ENCODE measurements at regions of chr10 and their contacts with region 1.

Region 1: DNA sequence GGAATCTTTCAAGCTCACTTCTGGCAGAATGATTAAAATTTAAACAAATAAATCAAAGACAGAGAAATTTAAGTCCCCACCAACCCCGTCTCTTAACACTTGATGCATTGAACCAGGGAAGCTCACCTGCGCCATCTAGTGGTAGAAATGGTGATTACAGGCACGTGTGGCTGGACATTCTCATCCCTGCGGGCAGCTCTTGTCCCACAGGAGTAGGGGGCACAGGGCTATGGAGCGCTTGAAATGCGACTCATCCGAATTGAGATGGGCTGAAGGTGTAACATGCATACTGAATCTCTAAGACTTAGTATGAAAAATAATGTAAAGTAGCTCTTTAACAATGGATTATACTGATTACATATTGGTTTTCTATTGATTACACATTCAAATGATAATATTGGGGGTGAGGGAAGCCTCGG is 24.8 kb upstream of the SLIT1 start:
- DNase-seq: peak; percentile 79
- ATAC-seq: peak; percentile 76
- H3K4me3 Mint-ChIP-seq: no peak overlapping the region
- H3K27ac Mint-ChIP-seq: no peak overlapping the region
- H3K4me1 Mint-ChIP-seq: no peaks in the 10 kb centered on the region
- H3K27me3 Mint-ChIP-seq: no peaks in the 10 kb centered on the region

Region 2: GRCh38 chr10:97096261-97097083 is 114.1 kb before region 1 on chr10:
- CTCF ChIA-PET with region 1: interaction called, 12 read pairs
- POLR2A ChIA-PET with region 1: no interaction called
- DNase-seq: peak; percentile 23
- ATAC-seq: peak; percentile 19
- H3K4me3 Mint-ChIP-seq: no peak overlapping the region
- H3K27ac Mint-ChIP-seq: no peak overlapping the region
- H3K4me1 Mint-ChIP-seq: peaks cover 17% of the 10 kb centered on the region
- H3K27me3 Mint-ChIP-seq: peaks cover 21% of the 10 kb centered on the region

Region 3: GRCh38 chr10:97170326-97170725 is 40.2 kb before region 1 on chr10:
- CTCF ChIA-PET with region 1: no interaction called
- POLR2A ChIA-PET with region 1: no interaction called
- DNase-seq: no peak
- ATAC-seq: no peak
- H3K4me3 Mint-ChIP-seq: no peak overlapping the region
- H3K27ac Mint-ChIP-seq: no peak overlapping the region
- H3K4me1 Mint-ChIP-seq: no peaks in the 10 kb centered on the region
- H3K27me3 Mint-ChIP-seq: peaks cover 15% of the 10 kb centered on the region

Region 4: GRCh38 chr10:97196223-97197029 is 14.1 kb before region 1 on chr10:
- CTCF ChIA-PET with region 1: interaction called, 145 read pairs
- POLR2A ChIA-PET with region 1: no interaction called
- DNase-seq: peak; percentile 77
- ATAC-seq: peak; percentile 90
- H3K4me3 Mint-ChIP-seq: peak overlapping the region; percentile 72
- H3K27ac Mint-ChIP-seq: no peak overlapping the region
- H3K4me1 Mint-ChIP-seq: peaks cover 25% of the 10 kb centered on the region
- H3K27me3 Mint-ChIP-seq: peaks cover 40% of the 10 kb centered on the region

Region 5: GRCh38 chr10:97222326-97222961 is 11.9 kb after region 1 on chr10:
- CTCF ChIA-PET with region 1: interaction called, 39 read pairs
- POLR2A ChIA-PET with region 1: no interaction called
- DNase-seq: no peak
- ATAC-seq: no peak
- H3K4me3 Mint-ChIP-seq: no peak overlapping the region
- H3K27ac Mint-ChIP-seq: no peak overlapping the region
- H3K4me1 Mint-ChIP-seq: peaks cover 34% of the 10 kb centered on the region
- H3K27me3 Mint-ChIP-seq: no peaks in the 10 kb centered on the region

Region 6: GRCh38 chr10:97234400-97234799 is 23.8 kb after region 1 on chr10:
- CTCF ChIA-PET with region 1: interaction called, 13 read pairs
- POLR2A ChIA-PET with region 1: no interaction called
- DNase-seq: no peak
- ATAC-seq: peak; percentile 33
- H3K4me3 Mint-ChIP-seq: no peak overlapping the region
- H3K27ac Mint-ChIP-seq: no peak overlapping the region
- H3K4me1 Mint-ChIP-seq: peaks cover 3% of the 10 kb centered on the region
- H3K27me3 Mint-ChIP-seq: no peaks in the 10 kb centered on the region

Region 7: GRCh38 chr10:97939446-97939990 is 729.0 kb after region 1 on chr10:
- CTCF ChIA-PET with region 1: no interaction called
- POLR2A ChIA-PET with region 1: no interaction called
- DNase-seq: no peak
- ATAC-seq: no peak
- H3K4me3 Mint-ChIP-seq: no peak overlapping the region
- H3K27ac Mint-ChIP-seq: no peak overlapping the region
- H3K4me1 Mint-ChIP-seq: no peaks in the 10 kb centered on the region
- H3K27me3 Mint-ChIP-seq: peaks cover 15% of the 10 kb centered on the region